ENCODE measurements at regions of chr20 and their contacts with region 1.

Region 1: DNA sequence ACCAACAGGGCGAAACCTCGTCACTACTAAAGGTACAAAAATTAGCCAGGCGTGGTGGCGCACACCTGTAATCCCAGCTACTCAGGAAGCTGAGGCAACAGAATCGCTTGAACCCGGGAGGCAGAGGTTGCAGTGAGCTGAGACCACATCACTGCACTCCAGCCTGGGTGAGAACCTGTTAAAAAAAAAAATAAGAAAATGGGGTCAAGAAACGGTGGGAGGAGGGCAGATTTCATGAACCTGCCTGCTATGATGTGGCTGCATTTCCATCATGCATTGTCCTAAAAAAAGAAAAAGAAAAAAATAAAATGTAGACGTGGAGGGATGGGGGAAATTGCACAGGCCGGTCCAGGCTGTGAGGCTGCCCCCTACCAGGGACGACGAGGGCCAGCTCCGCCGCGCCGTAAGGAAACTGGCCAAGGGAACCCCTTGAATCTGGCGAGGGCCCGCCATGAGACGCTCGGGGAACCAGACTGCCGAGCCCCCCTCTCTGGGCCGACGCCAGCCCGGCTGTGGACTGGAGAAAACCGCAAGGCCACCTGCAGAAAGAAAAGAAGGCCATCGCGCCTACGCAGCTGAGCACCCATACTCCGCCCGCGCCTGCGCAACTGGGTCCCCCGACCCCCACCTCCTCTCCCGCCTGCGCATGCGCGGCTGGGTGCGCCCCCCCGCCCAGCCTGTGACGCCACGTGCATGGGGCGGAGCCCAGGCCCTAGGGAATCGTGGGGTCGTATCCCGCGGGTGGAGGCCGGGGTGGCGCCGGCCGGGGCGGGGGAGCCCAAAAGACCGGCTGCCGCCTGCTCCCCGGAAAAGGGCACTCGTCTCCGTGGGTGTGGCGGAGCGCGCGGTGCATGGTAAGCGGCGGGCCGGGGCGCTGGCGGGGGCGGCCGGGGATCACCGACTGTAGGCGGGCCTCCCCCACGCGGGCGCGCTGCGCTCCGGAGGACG is at the start of gene ENTPD6:
- DNase-seq: peak; percentile 94 to 98 (median 97)
- ATAC-seq: peak; percentile 91 to 93
- H3K4me3 ChIP-seq: peak within 1 kb of the TSS; percentile 78
- H3K27ac ChIP-seq: peak within 1 kb of the TSS; percentile 66
- H3K4me1 ChIP-seq: peaks cover 17% of the 10 kb centered on the region
- H3K27me3 ChIP-seq: no peaks in the 10 kb centered on the region
- total RNA-seq, gene ENTPD6: 102 to 132 (median 127) TPM

Region 2: DNA sequence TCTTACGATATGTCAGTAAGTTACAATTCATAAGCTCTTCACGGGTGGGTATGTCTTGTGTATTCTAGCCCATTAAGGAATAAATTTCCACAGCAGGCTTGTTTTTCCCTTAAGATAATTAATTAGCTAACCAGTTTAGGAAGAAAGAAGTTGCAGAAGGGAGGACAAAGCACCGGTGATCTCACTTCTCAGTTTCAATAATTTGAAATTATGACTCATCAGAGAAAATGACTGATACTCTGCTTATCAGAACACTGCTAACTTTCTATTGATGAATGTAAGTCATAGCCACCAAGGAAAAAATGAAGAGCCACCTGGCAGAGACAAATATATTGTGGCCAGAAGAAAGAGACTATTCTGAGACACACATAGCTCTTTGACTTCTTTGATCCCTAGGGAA is 34.8 kb before region 1 on chr20:
- intact Hi-C with region 1: no loop called
- DNase-seq: no peak
- ATAC-seq: no peak
- H3K4me3 ChIP-seq: no peak overlapping the region
- H3K27ac ChIP-seq: no peak overlapping the region
- H3K4me1 ChIP-seq: no peaks in the 10 kb centered on the region
- H3K27me3 ChIP-seq: no peaks in the 10 kb centered on the region

Region 3: GRCh38 chr20:25247956-25248785 is 52.9 kb after region 1 on chr20 and contains the start of gene PYGB:
- intact Hi-C with region 1: loop called in 3 of 4 experiments (anchors 5 to 10 kb)
- DNase-seq: peak; percentile 80 to 92 (median 90)
- ATAC-seq: peak; percentile 89 to 94
- H3K4me3 ChIP-seq: peak within 1 kb of the TSS; percentile 90
- H3K27ac ChIP-seq: peak within 1 kb of the TSS; percentile 93
- H3K4me1 ChIP-seq: peaks cover 14% of the 10 kb centered on the region
- H3K27me3 ChIP-seq: no peaks in the 10 kb centered on the region
- total RNA-seq, gene PYGB: 154 to 219 (median 194) TPM

Region 4: GRCh38 chr20:25254986-25255680 is 59.8 kb after region 1 on chr20:
- intact Hi-C with region 1: loop called in 1 of 4 experiments (anchors 10 kb)
- DNase-seq: peak; percentile 55 to 69 (median 68)
- ATAC-seq: peak; percentile 88 to 89
- H3K4me3 ChIP-seq: no peak overlapping the region
- H3K27ac ChIP-seq: peak overlapping the region; percentile 71
- H3K4me1 ChIP-seq: peaks cover 19% of the 10 kb centered on the region
- H3K27me3 ChIP-seq: no peaks in the 10 kb centered on the region